ENCODE measurements at regions of chr3 and their contacts with region 1.

Region 1: DNA sequence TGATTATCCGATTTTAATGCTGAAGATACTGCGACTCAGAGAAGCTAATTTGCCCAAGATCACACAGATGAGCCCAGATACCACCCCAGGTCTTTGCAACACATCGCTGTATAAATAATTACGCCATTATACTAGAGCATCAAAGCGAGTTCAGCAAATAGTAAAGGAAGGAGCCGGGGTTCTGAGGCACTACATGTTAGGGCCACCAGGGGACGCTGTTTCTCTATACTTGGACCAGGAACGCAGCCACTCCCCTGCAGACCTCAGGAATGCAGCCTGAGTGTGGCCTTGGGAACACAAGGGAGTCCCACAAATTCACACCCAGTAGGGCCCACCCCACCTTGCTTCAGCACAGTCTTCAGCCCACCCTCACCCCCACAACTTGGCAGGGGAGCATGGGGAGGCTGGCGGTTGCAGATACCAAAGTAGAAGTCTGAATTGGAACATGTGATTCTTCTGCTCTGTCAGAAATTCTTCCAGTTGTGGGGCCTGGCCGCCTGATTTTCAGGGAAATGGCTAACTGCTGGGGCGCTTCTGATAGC is 57.8 kb upstream of the RYK start:
- DNase-seq: peak; percentile 84 to 87
- H3K4me3 ChIP-seq: peak overlapping the region; percentile 15; the same call in 1 of the 2 replicates
- H3K4me3 Mint-ChIP-seq: peak overlapping the region; percentile 57
- H3K27ac Mint-ChIP-seq: peak overlapping the region; percentile 92
- H3K4me1 ChIP-seq: peaks cover 51% of the 10 kb centered on the region
- H3K4me1 Mint-ChIP-seq: peaks cover 12% of the 10 kb centered on the region
- H3K27me3 ChIP-seq: no peaks in the 10 kb centered on the region
- H3K27me3 Mint-ChIP-seq: no peaks in the 10 kb centered on the region
- CTCF ChIP-seq: peak; percentile 98

Region 2: GRCh38 chr3:134333522-134334181 is 25.2 kb after region 1 on chr3:
- CTCF ChIA-PET with region 1: interaction called, 4 read pairs
- POLR2A ChIA-PET with region 1: interaction called, 13 read pairs
- intact Hi-C with region 1: loop called (anchors 1 kb)
- DNase-seq: peak; percentile 88 to 93
- H3K4me3 ChIP-seq: no peak overlapping the region
- H3K4me3 Mint-ChIP-seq: peak overlapping the region; percentile 55
- H3K27ac Mint-ChIP-seq: peak overlapping the region; percentile 95
- H3K4me1 ChIP-seq: peaks cover 93% of the 10 kb centered on the region
- H3K4me1 Mint-ChIP-seq: peaks cover 81% of the 10 kb centered on the region
- H3K27me3 ChIP-seq: no peaks in the 10 kb centered on the region
- H3K27me3 Mint-ChIP-seq: no peaks in the 10 kb centered on the region
- CTCF ChIP-seq: peak; percentile 36 to 39

Region 3: DNA sequence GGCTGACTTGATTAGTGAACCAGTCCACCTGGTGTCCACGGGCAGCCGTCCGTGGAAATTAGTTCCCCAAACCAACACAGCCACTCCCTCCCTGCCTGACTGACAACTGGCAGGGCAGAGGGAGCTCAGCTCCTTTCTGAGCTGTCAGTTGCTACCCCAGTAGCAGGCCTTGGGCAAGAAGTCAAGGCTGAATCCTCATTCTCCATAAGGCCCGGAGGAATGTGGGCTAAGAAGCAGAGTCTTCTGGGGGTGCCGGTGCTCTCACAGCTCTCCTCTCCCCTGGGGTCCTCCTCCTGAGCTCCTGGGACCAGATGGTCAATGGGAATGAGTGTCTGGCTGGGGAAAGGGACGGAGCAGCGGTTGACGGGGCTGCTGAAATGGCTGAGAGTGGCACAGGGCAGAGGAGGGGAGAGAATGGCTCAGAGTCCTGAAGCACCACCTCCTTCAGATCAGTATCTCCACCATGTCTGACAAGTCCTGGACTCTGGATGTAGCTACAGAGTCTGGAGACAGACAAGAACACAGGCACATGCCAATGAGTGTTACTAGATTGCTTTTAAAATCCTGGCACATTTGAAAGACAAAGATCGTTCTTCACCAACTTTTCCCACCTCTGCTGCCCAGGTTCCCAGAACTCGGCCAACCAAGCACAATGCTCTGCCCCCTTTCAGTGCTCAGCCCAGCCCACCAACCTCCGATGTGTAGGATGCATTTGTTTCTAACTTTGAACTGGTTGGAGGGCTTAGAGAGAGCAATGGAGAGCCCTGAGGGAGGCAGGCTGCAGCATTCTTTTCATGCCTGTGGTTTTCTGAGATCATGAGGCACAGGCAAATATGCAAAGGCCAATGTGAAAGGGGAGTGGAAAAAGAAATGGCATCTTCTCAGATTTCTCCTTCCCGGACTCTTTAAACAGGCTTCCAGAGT is 49.1 kb after region 1 on chr3:
- CTCF ChIA-PET with region 1: interaction called, 5 read pairs
- POLR2A ChIA-PET with region 1: interaction called, 4 read pairs
- intact Hi-C with region 1: loop called (anchors 1 kb)
- DNase-seq: peak; percentile 74 to 79
- H3K4me3 ChIP-seq: no peak overlapping the region
- H3K4me3 Mint-ChIP-seq: peak overlapping the region; percentile 60
- H3K27ac Mint-ChIP-seq: peak overlapping the region; percentile 65
- H3K4me1 ChIP-seq: peaks cover 98% of the 10 kb centered on the region
- H3K4me1 Mint-ChIP-seq: peaks cover 60% of the 10 kb centered on the region
- H3K27me3 ChIP-seq: no peaks in the 10 kb centered on the region
- H3K27me3 Mint-ChIP-seq: no peaks in the 10 kb centered on the region
- CTCF ChIP-seq: no peak

Region 4: GRCh38 chr3:134373994-134374790 is 65.8 kb after region 1 on chr3 and contains the start of gene AMOTL2:
- CTCF ChIA-PET with region 1: interaction called, 5 read pairs
- POLR2A ChIA-PET with region 1: interaction called, 6 read pairs
- intact Hi-C with region 1: loop called (anchors 1 kb)
- DNase-seq: peak; percentile 97
- H3K4me3 ChIP-seq: peak within 1 kb of the TSS; percentile 92
- H3K4me3 Mint-ChIP-seq: peak within 1 kb of the TSS; percentile 85
- H3K27ac Mint-ChIP-seq: peak within 1 kb of the TSS; percentile 77
- H3K4me1 ChIP-seq: peaks cover 61% of the 10 kb centered on the region
- H3K4me1 Mint-ChIP-seq: peaks cover 43% of the 10 kb centered on the region
- H3K27me3 ChIP-seq: no peaks in the 10 kb centered on the region
- H3K27me3 Mint-ChIP-seq: no peaks in the 10 kb centered on the region
- CTCF ChIP-seq: no peak
- total RNA-seq, gene AMOTL2: 220 and 271 TPM in 2 replicates

Region 5: GRCh38 chr3:134473868-134474546 is 165.6 kb after region 1 on chr3:
- CTCF ChIA-PET with region 1: interaction called, 37 read pairs
- POLR2A ChIA-PET with region 1: interaction called, 7 read pairs
- intact Hi-C with region 1: loop called (anchors 1 kb)
- DNase-seq: peak; percentile 77 to 84
- H3K4me3 ChIP-seq: no peak overlapping the region
- H3K4me3 Mint-ChIP-seq: no peak overlapping the region
- H3K27ac Mint-ChIP-seq: no peak overlapping the region
- H3K4me1 ChIP-seq: peaks cover 39% of the 10 kb centered on the region
- H3K4me1 Mint-ChIP-seq: peaks cover 10% of the 10 kb centered on the region
- H3K27me3 ChIP-seq: no peaks in the 10 kb centered on the region
- H3K27me3 Mint-ChIP-seq: no peaks in the 10 kb centered on the region
- CTCF ChIP-seq: peak; percentile 70 to 78

Measured in Caco-2 (cell line).